Mammary epithelial cell (primary cell): ENCODE measurements at regions of chr22 and their contacts with region 1.

Region 1: DNA sequence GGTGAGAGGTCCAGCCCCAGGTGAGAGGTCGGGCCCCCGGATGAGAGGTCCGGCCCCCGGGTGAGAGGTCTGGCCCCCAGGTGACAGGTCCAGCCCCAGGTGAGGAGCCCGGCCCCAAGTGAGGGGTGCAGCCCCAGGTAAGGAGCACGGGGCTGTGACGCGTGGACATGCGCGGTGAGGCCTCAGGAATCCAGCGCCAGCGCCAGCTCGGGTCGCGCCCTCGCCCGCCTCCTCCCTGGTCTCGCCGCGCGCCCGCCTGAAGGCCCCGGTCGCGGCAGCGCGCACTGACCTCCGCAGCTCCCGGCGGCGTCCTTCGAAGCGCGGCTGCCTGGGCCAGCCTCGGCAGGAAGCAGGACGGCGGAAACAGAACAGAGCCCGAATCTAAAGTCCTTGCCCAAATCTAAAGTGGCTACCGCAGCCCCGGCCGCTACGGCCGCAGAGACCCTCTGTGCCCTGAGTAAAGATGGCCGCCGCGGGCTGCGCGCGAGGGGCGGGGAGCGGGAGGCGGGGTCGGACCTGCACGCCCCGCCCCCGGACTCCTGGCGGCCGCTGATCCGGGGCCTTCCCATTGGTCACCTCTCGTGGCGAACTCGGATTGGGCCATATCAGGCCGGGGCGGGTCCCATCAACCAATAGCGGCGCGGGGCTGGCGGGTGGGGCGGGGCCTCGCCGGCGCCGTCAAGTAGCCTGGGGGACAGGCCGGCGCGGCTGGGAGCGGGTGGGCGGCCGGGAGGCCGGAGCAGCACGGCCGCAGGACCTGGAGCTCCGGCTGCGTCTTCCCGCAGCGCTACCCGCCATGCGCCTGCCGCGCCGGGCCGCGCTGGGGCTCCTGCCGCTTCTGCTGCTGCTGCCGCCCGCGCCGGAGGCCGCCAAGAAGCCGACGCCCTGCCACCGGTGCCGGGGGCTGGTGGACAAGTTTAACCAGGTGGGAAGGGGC is at the starts of genes ALG12 and CRELD2:
- DNase-seq: peak; percentile 95
- H3K4me3 ChIP-seq: peak within 1 kb of the TSS; percentile 73 to 95 (median 94)
- H3K27ac ChIP-seq: peak within 1 kb of the TSS; percentile 79
- H3K4me1 ChIP-seq: peaks cover 16% of the 10 kb centered on the region
- H3K27me3 ChIP-seq: no peaks in the 10 kb centered on the region
- CTCF ChIP-seq: no peak
- total RNA-seq, gene ALG12: 19.0 to 19.9 TPM
- total RNA-seq, gene CRELD2: 26.5 to 51.5 TPM

Region 2: DNA sequence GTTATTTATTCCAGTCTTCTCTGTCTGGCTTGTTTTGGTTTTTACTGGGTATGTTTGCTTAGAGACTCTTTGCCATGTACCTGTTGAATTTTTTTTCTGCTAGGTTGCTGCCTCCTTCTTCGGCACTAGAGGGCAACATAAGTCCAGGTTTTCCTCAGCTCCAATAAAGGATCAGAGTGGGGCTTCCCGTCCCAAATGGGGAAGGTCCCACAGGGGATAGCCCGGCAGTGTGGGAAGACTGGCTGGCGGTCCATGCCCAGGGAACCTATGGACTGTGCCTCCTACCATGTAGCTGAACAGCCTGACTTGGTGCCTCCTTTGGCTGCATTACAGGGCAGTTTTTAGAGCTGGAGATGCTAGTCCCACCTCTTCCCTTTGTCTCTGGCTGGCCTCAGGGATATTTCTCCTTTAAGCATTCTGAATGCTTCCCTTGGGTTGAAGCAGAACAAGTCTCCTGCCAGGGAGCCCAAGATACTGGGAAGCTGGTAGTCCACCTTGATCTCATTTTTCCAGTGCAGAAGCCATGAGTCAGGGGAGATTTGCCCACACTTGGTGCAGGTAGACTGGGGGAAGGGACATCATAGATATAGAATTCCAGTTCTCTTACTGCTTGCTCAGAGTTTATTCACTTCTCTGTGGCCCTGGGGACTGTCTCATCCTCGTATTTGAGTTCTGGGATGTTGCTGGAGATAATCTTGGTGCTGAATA is 150.7 kb before region 1 on chr22:
- CTCF ChIA-PET with region 1: no interaction called
- dilution Hi-C with region 1: no loop called
- in situ Hi-C with region 1: no loop called
- intact Hi-C with region 1: loop called (anchors 2 kb)
- DNase-seq: peak; percentile 52
- H3K4me3 ChIP-seq: no peak overlapping the region
- H3K27ac ChIP-seq: no peak overlapping the region
- H3K4me1 ChIP-seq: peaks cover 10% of the 10 kb centered on the region
- H3K27me3 ChIP-seq: no peaks in the 10 kb centered on the region
- CTCF ChIP-seq: peak; percentile 71 to 82

Region 3: DNA sequence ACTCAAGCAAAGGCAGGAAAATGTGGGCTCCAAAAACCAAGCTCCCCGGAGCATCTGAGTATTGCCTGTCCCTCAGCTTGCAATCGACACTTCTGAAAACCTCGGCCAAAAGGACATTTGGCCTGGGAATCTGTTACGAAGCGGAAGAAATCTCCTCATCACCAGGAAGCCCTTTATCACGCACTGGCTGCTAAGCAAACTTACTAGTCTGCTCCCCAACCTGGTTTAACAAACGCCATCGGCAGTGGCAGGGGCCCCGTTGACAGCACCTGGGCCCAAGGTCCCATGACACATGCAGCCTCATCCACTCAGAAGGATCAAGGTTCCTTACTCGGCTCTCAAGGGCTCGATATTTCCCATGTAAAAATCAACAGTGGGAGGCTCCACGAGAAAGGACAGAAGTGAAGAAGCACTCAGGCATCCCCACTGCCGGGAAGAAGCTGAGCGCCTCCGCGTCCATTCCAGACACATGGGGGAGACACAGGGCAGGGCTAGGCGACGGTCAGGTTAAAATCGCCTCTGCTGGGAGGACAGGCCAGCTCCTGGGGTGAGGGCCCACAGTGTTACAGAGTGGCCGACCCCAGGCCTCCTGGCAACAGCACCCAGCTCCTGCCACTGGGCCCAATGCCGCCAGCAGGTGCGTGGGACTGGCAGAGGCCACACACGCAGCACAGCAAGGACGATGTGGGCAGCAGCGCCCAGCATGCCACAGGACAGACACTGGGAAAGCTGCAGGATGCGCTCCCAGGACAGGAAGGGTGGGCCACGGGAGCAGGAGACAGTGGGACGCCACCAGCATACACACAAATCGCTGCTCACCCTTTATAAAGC is 117.6 kb before region 1 on chr22:
- CTCF ChIA-PET with region 1: no interaction called
- dilution Hi-C with region 1: loop called (anchors 5 kb)
- in situ Hi-C with region 1: no loop called
- intact Hi-C with region 1: no loop called
- DNase-seq: no peak
- H3K4me3 ChIP-seq: no peak overlapping the region
- H3K27ac ChIP-seq: no peak overlapping the region
- H3K4me1 ChIP-seq: no peaks in the 10 kb centered on the region
- H3K27me3 ChIP-seq: no peaks in the 10 kb centered on the region
- CTCF ChIP-seq: no peak

Region 4: DNA sequence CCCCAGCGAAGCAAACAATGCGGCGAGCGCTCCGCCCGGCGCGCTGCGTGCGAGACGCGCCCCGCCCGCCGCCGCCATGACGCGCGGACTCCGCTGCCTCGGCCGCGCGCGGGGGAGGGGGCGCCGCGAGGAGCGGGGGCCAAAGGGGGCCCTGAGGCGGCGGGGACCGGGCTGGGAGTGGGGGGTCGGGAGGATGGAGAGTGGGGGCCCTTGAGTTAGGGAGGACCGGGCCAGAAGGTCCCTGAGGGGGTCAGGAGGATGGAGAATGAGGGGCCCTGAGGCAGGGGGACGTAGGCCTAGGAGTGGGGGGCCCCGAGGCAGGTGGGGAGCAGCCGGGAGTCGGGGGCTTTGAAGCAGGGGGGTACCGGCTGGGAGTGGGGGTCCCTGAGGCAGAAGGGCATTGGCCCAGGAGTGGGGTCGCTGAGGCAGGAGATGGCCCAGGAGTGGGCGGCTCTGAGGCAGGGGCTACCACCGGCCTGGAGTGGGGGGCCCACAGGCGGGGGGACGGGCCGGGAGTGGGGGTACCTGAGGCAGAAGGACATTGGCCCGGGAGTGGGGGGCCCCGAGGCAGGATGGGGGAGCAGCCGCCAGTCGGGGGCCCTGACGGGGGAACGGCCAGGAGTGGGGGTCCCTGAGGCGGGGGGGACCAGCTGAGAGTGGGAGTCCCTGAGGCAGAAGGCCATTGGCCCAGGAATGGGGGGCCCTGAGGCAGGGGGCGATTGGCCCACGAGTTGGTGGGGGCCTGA is 90.2 kb before region 1 on chr22 and contains the start of gene BRD1:
- CTCF ChIA-PET with region 1: no interaction called
- dilution Hi-C with region 1: no loop called
- in situ Hi-C with region 1: no loop called
- intact Hi-C with region 1: loop called (anchors 1 kb)
- DNase-seq: peak; percentile 49
- H3K4me3 ChIP-seq: peak within 1 kb of the TSS; percentile 66 to 91 (median 75)
- H3K27ac ChIP-seq: peak within 1 kb of the TSS; percentile 77
- H3K4me1 ChIP-seq: peaks cover 25% of the 10 kb centered on the region
- H3K27me3 ChIP-seq: no peaks in the 10 kb centered on the region
- CTCF ChIP-seq: no peak
- total RNA-seq, gene BRD1: 25.5 to 26.9 TPM

Region 5: DNA sequence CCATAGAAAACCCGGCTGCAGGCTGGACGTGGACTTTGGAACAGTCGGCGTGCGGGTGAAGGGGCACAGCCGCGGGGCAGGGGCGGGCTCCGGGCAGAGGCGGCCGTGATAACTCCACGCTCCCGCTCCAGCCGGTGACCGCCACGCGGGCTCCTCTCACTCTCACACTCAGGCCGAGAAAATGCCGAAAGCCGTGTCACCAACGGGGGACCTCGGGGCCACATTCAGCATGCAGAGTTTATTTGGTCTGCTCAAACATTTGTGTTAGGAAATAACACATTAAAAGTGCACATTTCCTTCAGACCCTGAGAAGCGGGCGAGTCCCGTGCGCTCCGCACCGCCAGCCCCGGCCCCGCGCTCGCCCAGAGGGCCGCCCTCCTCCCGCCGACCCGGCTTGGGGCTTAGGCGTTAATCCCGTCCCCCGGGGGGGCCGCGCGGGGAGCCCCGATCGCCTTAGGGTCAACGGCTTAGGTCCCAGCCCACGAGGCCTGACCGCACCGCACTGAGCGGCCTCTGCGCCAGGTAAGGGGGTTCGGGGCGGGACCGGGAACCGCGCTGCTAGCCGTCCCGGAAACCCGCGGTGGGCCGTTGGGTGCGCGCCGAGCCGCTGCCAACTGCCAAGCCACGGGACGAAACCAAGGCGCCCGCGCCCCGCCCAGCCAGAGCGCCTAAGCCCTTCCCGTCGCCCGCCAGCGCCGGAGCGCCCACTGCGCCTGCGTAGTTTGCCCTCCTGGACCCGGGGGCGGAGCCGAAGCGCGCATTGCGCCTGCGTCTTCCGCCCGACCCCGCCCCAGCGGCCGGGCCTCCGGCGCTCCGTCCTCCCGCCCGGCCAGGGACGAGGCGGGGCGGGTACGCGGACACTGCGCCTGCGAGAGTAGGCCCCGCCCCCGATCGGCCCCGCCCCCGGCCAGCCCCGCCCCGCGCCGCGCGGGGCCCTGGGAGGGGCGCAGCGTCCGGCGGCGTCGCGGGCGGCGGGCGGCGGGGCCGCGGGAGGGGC is 65.0 kb before region 1 on chr22 and contains the start of gene ZBED4:
- CTCF ChIA-PET with region 1: no interaction called
- dilution Hi-C with region 1: no loop called
- in situ Hi-C with region 1: no loop called
- intact Hi-C with region 1: loop called (anchors 1 kb)
- DNase-seq: peak; percentile 97
- H3K4me3 ChIP-seq: peak within 1 kb of the TSS; percentile 64 to 90 (median 81)
- H3K27ac ChIP-seq: peak within 1 kb of the TSS; percentile 68
- H3K4me1 ChIP-seq: peaks cover 21% of the 10 kb centered on the region
- H3K27me3 ChIP-seq: peaks cover 24% of the 10 kb centered on the region
- CTCF ChIP-seq: no peak
- total RNA-seq, gene ZBED4: 16.8 to 20.7 TPM

Region 6: GRCh38 chr22:50012716-50013181 is 94.5 kb after region 1 on chr22 and contains the start of gene IL17REL:
- CTCF ChIA-PET with region 1: no interaction called
- dilution Hi-C with region 1: loop called (anchors 5 kb)
- in situ Hi-C with region 1: no loop called
- intact Hi-C with region 1: no loop called
- DNase-seq: no peak
- H3K4me3 ChIP-seq: no peak within 1 kb of the TSS
- H3K27ac ChIP-seq: no peak within 1 kb of the TSS
- H3K4me1 ChIP-seq: peaks cover 18% of the 10 kb centered on the region
- H3K27me3 ChIP-seq: peaks cover 27% of the 10 kb centered on the region
- CTCF ChIP-seq: no peak
- total RNA-seq, gene IL17REL: not detected